Activated CD8-positive, alpha-beta T cell treated with anti-CD3 and anti-CD28 coated beads for 36 hours (primary cell): ENCODE measurements at regions of chr12 and their contacts with region 1.

Region 1: GRCh38 chr12:49945394-49946080 is 5.0 kb upstream of the AQP2 start:
- DNase-seq: peak; percentile 93
- ATAC-seq: peak; percentile 99
- H3K4me3 Mint-ChIP-seq: peak overlapping the region; percentile 76
- H3K27ac Mint-ChIP-seq: peak overlapping the region; percentile 91
- H3K4me1 Mint-ChIP-seq: peaks cover 25% of the 10 kb centered on the region
- H3K27me3 Mint-ChIP-seq: no peaks in the 10 kb centered on the region
- CTCF ChIP-seq: peak; percentile 89

Region 2: DNA sequence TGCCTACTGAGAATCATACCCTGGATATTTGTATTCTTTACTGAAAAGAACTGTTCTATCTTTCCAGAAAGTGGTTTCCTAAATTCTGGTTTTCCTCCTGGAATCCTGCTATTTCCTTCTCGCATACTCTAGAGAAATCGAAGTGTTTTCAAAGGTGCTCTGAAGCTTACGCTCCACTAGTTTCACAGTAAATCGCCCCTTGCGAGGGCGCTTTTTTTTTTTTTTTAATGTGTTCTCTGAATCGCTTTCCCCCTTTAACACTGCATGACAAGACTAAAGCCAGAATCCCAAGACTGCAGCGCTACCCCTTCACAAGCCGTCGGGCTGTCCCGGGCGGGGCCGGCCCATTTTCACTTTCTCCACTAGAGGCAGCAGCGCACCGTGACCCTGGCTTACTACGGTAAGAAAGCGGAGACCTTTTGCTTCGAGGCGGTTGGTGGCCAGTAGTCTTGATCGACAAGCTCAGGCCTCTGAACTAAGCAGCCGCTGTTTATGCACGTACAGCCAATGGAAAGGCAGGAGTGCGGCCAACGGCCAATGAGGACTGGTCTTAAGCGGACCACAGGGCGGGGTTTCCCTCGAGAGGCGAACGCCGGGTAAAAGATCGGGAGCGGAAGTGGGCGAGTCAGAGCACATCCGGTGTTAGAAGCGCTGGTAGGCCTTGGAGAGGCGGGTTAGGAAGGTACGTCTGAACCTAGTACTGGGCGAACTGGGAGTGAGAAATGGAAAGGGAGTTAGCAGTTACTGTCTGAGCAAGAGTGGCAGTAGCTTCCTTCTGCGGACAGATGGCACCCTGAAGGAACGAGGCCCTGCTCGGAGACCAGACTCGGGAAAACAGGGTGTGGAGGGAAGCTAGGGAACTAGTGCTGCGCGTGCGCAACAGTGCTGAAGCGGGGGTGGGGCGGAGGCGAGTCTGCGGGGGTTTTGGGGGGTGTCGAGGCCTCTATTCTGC is 204.3 kb before region 1 on chr12 and contains the start of gene TMBIM6:
- CTCF ChIA-PET with region 1: interaction called, 10 read pairs
- POLR2A ChIA-PET with region 1: interaction called, 3 read pairs
- intact Hi-C with region 1: no loop called
- DNase-seq: peak; percentile 100
- ATAC-seq: peak; percentile 91
- H3K4me3 Mint-ChIP-seq: peak within 1 kb of the TSS; percentile 99
- H3K27ac Mint-ChIP-seq: peak within 1 kb of the TSS; percentile 95
- H3K4me1 Mint-ChIP-seq: peaks cover 31% of the 10 kb centered on the region
- H3K27me3 Mint-ChIP-seq: no peaks in the 10 kb centered on the region
- CTCF ChIP-seq: peak; percentile 95
- total RNA-seq, gene TMBIM6: 437 to 443 TPM

Region 3: GRCh38 chr12:49866859-49867579 is 78.5 kb before region 1 on chr12:
- CTCF ChIA-PET with region 1: interaction called, 43 read pairs
- POLR2A ChIA-PET with region 1: no interaction called
- intact Hi-C with region 1: no loop called
- DNase-seq: peak; percentile 85
- ATAC-seq: peak; percentile 98
- H3K4me3 Mint-ChIP-seq: no peak overlapping the region
- H3K27ac Mint-ChIP-seq: no peak overlapping the region
- H3K4me1 Mint-ChIP-seq: no peaks in the 10 kb centered on the region
- H3K27me3 Mint-ChIP-seq: no peaks in the 10 kb centered on the region
- CTCF ChIP-seq: peak; percentile 92

Region 4: DNA sequence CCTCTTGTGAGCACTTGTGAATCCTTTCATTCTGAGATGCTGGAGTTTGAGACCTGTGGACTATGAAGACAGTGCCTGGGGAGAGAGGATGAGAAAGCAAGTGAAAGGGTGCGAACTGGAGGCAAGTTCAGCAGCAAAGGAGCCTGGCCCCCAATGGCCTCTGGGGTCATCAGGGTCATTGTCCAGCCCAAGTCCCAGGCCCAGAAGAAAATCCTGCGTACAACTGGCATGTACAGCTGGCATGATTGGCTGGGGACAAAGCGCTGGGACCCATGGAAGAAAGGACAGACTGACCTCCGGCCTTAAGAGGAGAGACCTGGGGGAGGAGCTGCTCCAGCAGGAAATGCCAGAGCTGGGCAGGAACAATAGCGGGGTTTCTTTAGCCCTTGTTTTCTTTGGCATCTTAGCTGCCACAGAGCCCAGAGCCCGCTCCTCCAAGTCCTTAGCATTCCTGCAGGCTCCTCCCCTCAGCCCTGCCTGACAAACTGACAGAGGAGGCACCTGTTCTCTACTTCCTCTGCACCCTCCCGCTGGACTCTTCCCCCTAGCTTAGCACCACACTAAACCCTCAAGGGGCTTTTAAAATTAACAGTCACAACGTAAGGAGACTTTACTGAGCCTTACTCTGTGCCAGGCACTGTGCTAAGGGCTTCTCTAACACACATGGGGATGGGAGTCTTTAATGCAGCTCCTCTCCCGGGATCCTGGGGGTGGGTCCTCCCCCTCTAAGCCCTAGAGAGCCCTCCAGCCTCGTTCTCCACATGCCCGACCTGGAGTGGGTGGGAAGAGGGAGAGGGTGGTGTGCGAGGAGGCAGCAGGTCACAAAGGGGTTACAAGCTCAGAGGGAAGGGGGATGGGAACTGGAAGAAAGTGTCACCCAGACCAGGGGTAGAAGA is 14.3 kb after region 1 on chr12:
- CTCF ChIA-PET with region 1: interaction called, 128 read pairs
- POLR2A ChIA-PET with region 1: interaction called, 3 read pairs
- intact Hi-C with region 1: no loop called
- DNase-seq: no peak
- ATAC-seq: no peak
- H3K4me3 Mint-ChIP-seq: no peak overlapping the region
- H3K27ac Mint-ChIP-seq: no peak overlapping the region
- H3K4me1 Mint-ChIP-seq: peaks cover 6% of the 10 kb centered on the region
- H3K27me3 Mint-ChIP-seq: peaks cover 67% of the 10 kb centered on the region
- CTCF ChIP-seq: no peak

Region 5: GRCh38 chr12:49983892-49984291 is 38.4 kb after region 1 on chr12:
- CTCF ChIA-PET with region 1: interaction called, 22 read pairs
- POLR2A ChIA-PET with region 1: no interaction called
- intact Hi-C with region 1: no loop called
- DNase-seq: no peak
- ATAC-seq: no peak
- H3K4me3 Mint-ChIP-seq: no peak overlapping the region
- H3K27ac Mint-ChIP-seq: no peak overlapping the region
- H3K4me1 Mint-ChIP-seq: peaks cover 4% of the 10 kb centered on the region
- H3K27me3 Mint-ChIP-seq: no peaks in the 10 kb centered on the region
- CTCF ChIP-seq: no peak

Region 6: GRCh38 chr12:50055831-50056638 is 110.5 kb after region 1 on chr12:
- CTCF ChIA-PET with region 1: interaction called, 17 read pairs
- POLR2A ChIA-PET with region 1: no interaction called
- intact Hi-C with region 1: no loop called
- DNase-seq: peak; percentile 74
- ATAC-seq: peak; percentile 46
- H3K4me3 Mint-ChIP-seq: peak overlapping the region; percentile 45
- H3K27ac Mint-ChIP-seq: peak overlapping the region; percentile 39
- H3K4me1 Mint-ChIP-seq: peaks cover 41% of the 10 kb centered on the region
- H3K27me3 Mint-ChIP-seq: peaks cover 28% of the 10 kb centered on the region
- CTCF ChIP-seq: peak; percentile 98